Activated CD4-positive, alpha-beta T cell treated with anti-CD3 and anti-CD28 coated beads, Interleukin-2, amount 10 ng/mL, durations not matched to agents 24 days and 14 days (primary cell): ENCODE measurements at regions of chr2 and their contacts with region 1.

Region 1: GRCh38 chr2:19347619-19348562 is 10.5 kb downstream of the OSR1 start:
- DNase-seq: peak; percentile 100
- H3K4me3 Mint-ChIP-seq: peak overlapping the region; percentile 93
- H3K27ac Mint-ChIP-seq: peak overlapping the region; percentile 99
- H3K4me1 Mint-ChIP-seq: peaks cover 20% of the 10 kb centered on the region
- H3K27me3 Mint-ChIP-seq: peaks cover 33% of the 10 kb centered on the region

Region 2: GRCh38 chr2:17540093-17540812 is 1807.6 kb before region 1 on chr2 and contains the start of gene VSNL1:
- intact Hi-C with region 1: loop called (anchors 10 kb)
- DNase-seq: no peak
- H3K4me3 Mint-ChIP-seq: no peak within 1 kb of the TSS
- H3K27ac Mint-ChIP-seq: no peak within 1 kb of the TSS
- H3K4me1 Mint-ChIP-seq: peaks cover 3% of the 10 kb centered on the region
- H3K27me3 Mint-ChIP-seq: peaks cover 72% of the 10 kb centered on the region
- total RNA-seq, gene VSNL1: not detected in 2 replicates

Region 3: GRCh38 chr2:18560031-18560796 is 787.7 kb before region 1 on chr2 and contains the start of gene RDH14:
- intact Hi-C with region 1: loop called (anchors 1 kb)
- DNase-seq: peak; percentile 97
- H3K4me3 Mint-ChIP-seq: peak within 1 kb of the TSS; percentile 94
- H3K27ac Mint-ChIP-seq: peak within 1 kb of the TSS; percentile 96
- H3K4me1 Mint-ChIP-seq: peaks cover 29% of the 10 kb centered on the region
- H3K27me3 Mint-ChIP-seq: no peaks in the 10 kb centered on the region
- total RNA-seq, gene RDH14: 14.2 and 15.1 TPM in 2 replicates

Region 4: GRCh38 chr2:19362755-19363473 is 15.0 kb after region 1 on chr2:
- intact Hi-C with region 1: loop called (anchors 1 kb)
- DNase-seq: peak; percentile 80
- H3K4me3 Mint-ChIP-seq: peak overlapping the region; percentile 94
- H3K27ac Mint-ChIP-seq: peak overlapping the region; percentile 56
- H3K4me1 Mint-ChIP-seq: peaks cover 21% of the 10 kb centered on the region
- H3K27me3 Mint-ChIP-seq: peaks cover 94% of the 10 kb centered on the region

Region 5: DNA sequence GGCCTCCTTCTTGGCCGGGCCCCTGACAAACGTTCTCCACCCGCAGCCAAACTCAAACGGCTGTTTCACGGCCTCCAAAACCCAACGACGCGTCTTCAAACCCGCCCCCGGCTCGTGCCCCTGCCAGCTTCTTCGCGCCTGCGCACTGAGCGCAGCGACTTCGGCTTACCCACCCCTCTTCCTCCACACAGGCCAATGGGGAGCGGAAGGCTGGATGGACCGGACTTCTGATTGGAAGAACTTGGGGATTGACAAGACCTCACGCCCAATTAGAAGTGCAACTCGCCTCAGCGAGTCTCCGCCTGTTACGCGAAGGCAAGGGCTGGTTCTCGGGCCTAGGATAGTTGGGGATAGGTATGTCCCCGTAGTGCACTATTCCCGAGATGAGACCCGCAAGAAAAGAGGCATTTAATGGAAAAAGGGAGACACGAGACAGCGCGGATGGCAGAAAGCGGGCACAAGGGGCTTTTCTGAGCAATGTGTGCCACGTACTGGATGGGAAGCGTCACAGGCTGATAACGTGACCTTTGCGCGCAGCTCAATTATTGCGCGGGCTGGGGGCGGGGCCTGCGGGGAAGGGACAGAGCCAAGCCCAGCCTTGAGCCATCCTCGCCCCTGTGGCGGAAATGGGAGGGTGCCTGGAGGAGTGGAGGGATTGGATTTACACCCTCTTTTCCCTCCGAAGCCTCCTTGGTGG is 703.8 kb after region 1 on chr2 and contains the start of gene LAPTM4A:
- intact Hi-C with region 1: loop called (anchors 1 kb)
- DNase-seq: peak; percentile 99
- H3K4me3 Mint-ChIP-seq: no peak within 1 kb of the TSS
- H3K27ac Mint-ChIP-seq: no peak within 1 kb of the TSS
- H3K4me1 Mint-ChIP-seq: peaks cover 23% of the 10 kb centered on the region
- H3K27me3 Mint-ChIP-seq: peaks cover 22% of the 10 kb centered on the region
- total RNA-seq, gene LAPTM4A: 24.3 and 25.3 TPM in 2 replicates